Ovary (tissue), 10 donors: ENCODE measurements at regions of chr5 and their contacts with region 1.

Region 1: DNA sequence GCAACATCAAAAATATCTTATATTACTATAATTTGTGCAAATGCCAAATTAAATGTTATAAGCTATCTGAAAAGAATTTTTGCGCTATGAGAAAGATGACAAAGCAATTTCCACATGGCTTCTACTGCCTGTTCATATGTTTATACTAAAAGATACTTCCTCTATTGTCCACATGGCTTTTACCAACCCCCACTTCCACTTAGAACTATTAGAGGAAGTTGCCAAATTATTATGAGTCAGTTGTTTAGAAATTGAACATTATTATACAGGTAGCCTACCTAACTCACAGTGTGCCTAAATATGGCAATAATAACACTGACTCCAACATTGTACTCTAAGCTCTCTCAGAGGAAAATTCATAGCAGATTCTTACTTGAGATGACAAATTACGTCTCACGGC is 37.6 kb upstream of the SLC27A6 start:
- DNase-seq: no peak
- H3K4me3 ChIP-seq: no peak overlapping the region
- H3K27ac ChIP-seq: no peak overlapping the region
- H3K4me1 ChIP-seq: peaks cover 4% of the 10 kb centered on the region
- H3K27me3 ChIP-seq: no peaks in the 10 kb centered on the region
- CTCF ChIP-seq: no peak
- EP300 ChIP-seq: no peak
- POLR2A ChIP-seq: no peak

Region 2: DNA sequence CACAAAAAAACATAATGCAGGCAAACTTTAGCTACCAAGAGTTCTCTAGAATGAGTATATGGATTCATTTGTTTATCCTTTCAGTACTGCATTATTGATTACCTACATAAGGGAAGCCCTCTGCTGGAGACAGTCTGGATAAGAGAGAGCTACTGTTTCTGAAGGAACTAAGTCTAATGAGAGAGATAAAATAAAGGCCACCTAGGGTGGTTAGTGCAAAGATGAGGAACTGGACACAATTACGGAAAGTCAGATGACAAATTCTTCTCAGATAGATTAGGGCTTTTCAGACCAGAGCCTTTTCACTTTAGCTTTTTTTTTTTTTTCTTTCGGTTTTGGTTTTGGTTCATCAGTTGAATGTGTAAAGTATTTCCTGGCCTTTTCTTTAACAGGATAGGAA is 198.2 kb after region 1 on chr5:
- intact Hi-C with region 1: loop called in 1 of 4 experiments (anchors 5 kb)
- DNase-seq: no peak
- H3K4me3 ChIP-seq: no peak overlapping the region
- H3K27ac ChIP-seq: no peak overlapping the region
- H3K4me1 ChIP-seq: no peaks in the 10 kb centered on the region
- H3K27me3 ChIP-seq: no peaks in the 10 kb centered on the region
- CTCF ChIP-seq: no peak
- EP300 ChIP-seq: no peak
- POLR2A ChIP-seq: no peak